AG04450 (cell line): ENCODE measurements at regions of chr1 and their contacts with region 1.

Region 1: GRCh38 chr1:84345220-84345619 is 43.7 kb downstream of the SAMD13 start:
- DNase-seq: no peak
- H3K4me3 ChIP-seq: no peak overlapping the region
- H3K27ac ChIP-seq: no peak overlapping the region
- H3K27me3 ChIP-seq: no peaks in the 10 kb centered on the region
- CTCF ChIP-seq: no peak

Region 2: DNA sequence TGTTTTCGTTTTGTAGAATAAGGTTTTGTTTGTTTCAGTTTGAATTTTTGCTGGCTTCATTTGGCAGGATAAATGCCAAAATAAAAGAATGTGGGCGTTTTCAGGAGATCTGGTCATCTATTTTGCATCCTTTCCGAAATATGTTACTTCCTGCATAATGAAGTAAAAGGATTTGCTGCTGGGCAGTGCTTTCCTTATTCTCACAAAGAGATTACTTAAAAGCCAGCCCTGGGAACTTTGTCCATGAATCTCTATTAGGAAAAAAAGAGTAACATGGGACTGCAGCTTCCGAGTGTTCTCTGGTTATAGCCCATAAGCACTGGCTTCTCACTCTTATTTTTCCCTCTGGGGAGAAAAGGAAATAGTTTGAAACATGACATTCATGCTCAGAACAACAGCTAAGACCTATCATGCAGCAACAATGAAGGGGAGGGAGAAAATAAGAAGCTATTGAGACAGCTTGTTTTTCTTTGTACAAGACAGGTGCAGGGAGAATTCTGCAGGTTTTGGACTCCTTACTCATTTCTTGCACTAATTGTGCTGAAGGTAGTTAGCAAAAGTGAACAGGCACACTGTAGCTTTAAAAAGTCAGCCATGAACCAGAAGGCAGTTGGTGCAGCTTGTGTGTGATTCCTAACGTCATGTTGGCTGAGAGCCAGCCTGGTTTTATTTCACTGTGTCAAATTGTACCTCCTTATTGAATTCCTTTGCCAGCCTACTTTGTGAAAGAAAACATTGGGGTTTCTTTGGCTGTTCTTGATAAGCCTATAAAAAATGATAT is 44.0 kb before region 1 on chr1 and contains the start of gene SAMD13:
- CTCF ChIA-PET with region 1: interaction called, 8 read pairs
- POLR2A ChIA-PET with region 1: interaction called, 10 read pairs
- DNase-seq: peak; percentile 29
- H3K4me3 ChIP-seq: peak within 1 kb of the TSS; percentile 7
- H3K27ac ChIP-seq: no peak within 1 kb of the TSS
- H3K27me3 ChIP-seq: no peaks in the 10 kb centered on the region
- CTCF ChIP-seq: no peak
- polyA plus RNA-seq, gene SAMD13: 0.99 and 1.0 TPM in 2 replicates